GM12878 (cell line): ENCODE measurements at regions of chr19 and their contacts with region 1.

Region 1: GRCh38 chr19:46919324-46919723 is 58.5 kb downstream of the ARHGAP35 start:
- DNase-seq: no peak
- ATAC-seq: no peak
- H3K4me3 ChIP-seq: no peak overlapping the region
- H3K27ac ChIP-seq: no peak overlapping the region
- H3K4me1 ChIP-seq: peaks cover 13% of the 10 kb centered on the region
- H3K27me3 ChIP-seq: no peaks in the 10 kb centered on the region
- CTCF ChIP-seq: no peak
- EP300 ChIP-seq: no peak
- POLR2A ChIP-seq: no peak
- RAD21 ChIP-seq: no peak

Region 2: DNA sequence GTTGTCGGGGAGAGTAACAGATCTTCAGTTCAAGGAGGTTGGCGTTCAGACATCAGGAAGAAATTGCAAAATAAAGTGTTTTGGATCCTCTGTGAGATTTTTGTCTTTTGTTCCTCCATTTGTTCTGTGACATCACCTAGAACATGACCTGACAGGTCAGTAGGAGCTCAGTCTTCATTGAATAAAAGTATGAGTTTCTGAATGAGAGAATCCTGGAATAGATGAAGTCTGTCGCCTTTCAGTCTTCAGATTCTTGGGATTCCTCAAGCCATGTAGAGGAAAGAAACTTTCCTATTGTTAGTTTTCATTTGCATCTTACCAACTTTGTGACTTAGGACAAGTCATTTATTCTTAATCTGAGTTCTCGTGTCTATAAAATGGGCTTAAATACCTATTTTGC is 44.1 kb before region 1 on chr19:
- CTCF ChIA-PET with region 1: no interaction called
- POLR2A ChIA-PET with region 1: no interaction called
- RAD21 ChIA-PET with region 1: no interaction called
- SMC1A ChIA-PET with region 1: no interaction called
- in situ Hi-C with region 1: no loop called
- intact Hi-C with region 1: no loop called
- DNase-seq: no peak
- ATAC-seq: no peak
- H3K4me3 ChIP-seq: no peak overlapping the region
- H3K27ac ChIP-seq: no peak overlapping the region
- H3K4me1 ChIP-seq: no peaks in the 10 kb centered on the region
- H3K27me3 ChIP-seq: no peaks in the 10 kb centered on the region
- CTCF ChIP-seq: no peak
- EP300 ChIP-seq: no peak
- POLR2A ChIP-seq: no peak
- RAD21 ChIP-seq: no peak

Region 3: GRCh38 chr19:46887240-46887782 is 32.0 kb before region 1 on chr19:
- CTCF ChIA-PET with region 1: no interaction called
- POLR2A ChIA-PET with region 1: no interaction called
- RAD21 ChIA-PET with region 1: no interaction called
- SMC1A ChIA-PET with region 1: no interaction called
- in situ Hi-C with region 1: no loop called
- intact Hi-C with region 1: no loop called
- DNase-seq: no peak
- ATAC-seq: no peak
- H3K4me3 ChIP-seq: no peak overlapping the region
- H3K27ac ChIP-seq: peak overlapping the region; percentile 51
- H3K4me1 ChIP-seq: peaks cover 13% of the 10 kb centered on the region
- H3K27me3 ChIP-seq: no peaks in the 10 kb centered on the region
- CTCF ChIP-seq: no peak
- EP300 ChIP-seq: no peak
- POLR2A ChIP-seq: no peak
- RAD21 ChIP-seq: no peak

Region 4: GRCh38 chr19:46907880-46908279 is 11.4 kb before region 1 on chr19:
- CTCF ChIA-PET with region 1: interaction called, 13 read pairs
- POLR2A ChIA-PET with region 1: interaction called, 10 read pairs
- RAD21 ChIA-PET with region 1: no interaction called
- SMC1A ChIA-PET with region 1: interaction called, 8 read pairs
- in situ Hi-C with region 1: no loop called
- intact Hi-C with region 1: no loop called
- DNase-seq: no peak
- ATAC-seq: no peak
- H3K4me3 ChIP-seq: no peak overlapping the region
- H3K27ac ChIP-seq: no peak overlapping the region
- H3K4me1 ChIP-seq: no peaks in the 10 kb centered on the region; the same call in 1 of the 2 replicates
- H3K27me3 ChIP-seq: no peaks in the 10 kb centered on the region
- CTCF ChIP-seq: no peak
- EP300 ChIP-seq: no peak
- POLR2A ChIP-seq: no peak
- RAD21 ChIP-seq: no peak